Activated naive CD8-positive, alpha-beta T cell treated with anti-CD3 and anti-CD28 coated beads, Interleukin-2, amount 10 ng/mL, durations not matched to agents 7 days and 5 days (primary cell): ENCODE measurements at regions of chr16 and their contacts with region 1.

Region 1: GRCh38 chr16:89115216-89115861 is 21.7 kb downstream of the ACSF3 start:
- DNase-seq: peak; percentile 80
- ATAC-seq: peak; percentile 95
- H3K4me3 Mint-ChIP-seq: peak overlapping the region; percentile 73
- H3K27ac Mint-ChIP-seq: peak overlapping the region; percentile 90
- H3K4me1 Mint-ChIP-seq: peaks cover 22% of the 10 kb centered on the region
- H3K27me3 Mint-ChIP-seq: no peaks in the 10 kb centered on the region

Region 2: DNA sequence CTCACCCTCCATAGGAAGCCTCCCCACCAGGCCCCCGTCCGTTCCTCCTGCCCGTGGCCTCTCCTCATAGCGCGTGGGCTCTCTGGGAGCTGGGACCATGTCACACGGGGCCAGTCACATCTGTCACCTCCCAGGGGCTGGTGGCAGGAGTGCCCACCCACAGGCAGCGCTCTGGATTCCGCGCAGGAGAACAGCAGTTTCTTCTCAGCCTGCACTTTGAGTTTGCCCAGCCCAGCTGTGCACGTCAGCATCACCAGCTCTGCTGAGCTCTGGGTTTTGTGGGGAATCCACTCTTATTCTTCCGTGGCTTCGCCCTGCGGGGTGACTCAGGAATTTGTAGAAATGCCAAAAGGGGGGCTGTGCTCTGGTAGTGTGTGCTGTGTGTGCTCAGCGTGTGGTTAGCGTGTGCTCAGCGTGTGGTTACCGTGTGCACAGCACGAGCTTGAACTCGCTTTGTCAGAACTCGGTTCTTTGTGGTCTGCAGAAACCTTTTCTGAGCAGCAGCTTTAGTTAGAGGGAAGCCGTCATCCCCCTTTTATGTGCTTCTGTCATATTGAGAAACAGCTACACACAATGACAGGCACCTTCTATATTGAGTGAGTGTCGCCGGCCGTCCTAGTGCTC is 18.5 kb before region 1 on chr16:
- POLR2A ChIA-PET with region 1: interaction called, 10 read pairs
- DNase-seq: peak; percentile 65
- ATAC-seq: peak; percentile 76
- H3K4me3 Mint-ChIP-seq: peak overlapping the region; percentile 76
- H3K27ac Mint-ChIP-seq: peak overlapping the region; percentile 94
- H3K4me1 Mint-ChIP-seq: peaks cover 54% of the 10 kb centered on the region
- H3K27me3 Mint-ChIP-seq: no peaks in the 10 kb centered on the region